Endothelial cell of umbilical vein (primary cell): ENCODE measurements at regions of chr3 and their contacts with region 1.

Region 1: GRCh38 chr3:100893590-100893989 is 99.6 kb downstream of the ABI3BP start:
- DNase-seq: peak; percentile 74
- H3K4me3 ChIP-seq: no peak overlapping the region
- H3K27ac ChIP-seq: no peak overlapping the region
- H3K4me1 ChIP-seq: peaks cover 8% of the 10 kb centered on the region
- H3K27me3 ChIP-seq: no peaks in the 10 kb centered on the region
- CTCF ChIP-seq: peak; percentile 78 to 80
- POLR2A ChIP-seq: no peak

Region 2: GRCh38 chr3:99833617-99834205 is 1059.9 kb before region 1 on chr3:
- CTCF ChIA-PET with region 1: interaction called, 4 read pairs
- POLR2A ChIA-PET with region 1: no interaction called
- dilution Hi-C with region 1: no loop called
- intact Hi-C with region 1: loop called (anchors 5 kb)
- DNase-seq: peak; percentile 87
- H3K4me3 ChIP-seq: no peak overlapping the region
- H3K27ac ChIP-seq: no peak overlapping the region
- H3K4me1 ChIP-seq: peaks cover 23% of the 10 kb centered on the region
- H3K27me3 ChIP-seq: no peaks in the 10 kb centered on the region
- CTCF ChIP-seq: no peak
- POLR2A ChIP-seq: no peak

Region 3: GRCh38 chr3:100697172-100697571 is 196.4 kb before region 1 on chr3:
- CTCF ChIA-PET with region 1: no interaction called
- POLR2A ChIA-PET with region 1: no interaction called
- dilution Hi-C with region 1: no loop called
- intact Hi-C with region 1: no loop called
- DNase-seq: no peak
- H3K4me3 ChIP-seq: no peak overlapping the region
- H3K27ac ChIP-seq: no peak overlapping the region
- H3K4me1 ChIP-seq: no peaks in the 10 kb centered on the region
- H3K27me3 ChIP-seq: peaks cover 12 to 35% of the 10 kb centered on the region in 2 experiments
- CTCF ChIP-seq: no peak
- POLR2A ChIP-seq: no peak

Region 4: GRCh38 chr3:100825574-100825973 is 68.0 kb before region 1 on chr3:
- CTCF ChIA-PET with region 1: interaction called, 4 read pairs
- POLR2A ChIA-PET with region 1: no interaction called
- dilution Hi-C with region 1: no loop called
- intact Hi-C with region 1: loop called (anchors 2 kb)
- DNase-seq: peak; percentile 70
- H3K4me3 ChIP-seq: no peak overlapping the region
- H3K27ac ChIP-seq: no peak overlapping the region
- H3K4me1 ChIP-seq: peaks cover 5% of the 10 kb centered on the region
- H3K27me3 ChIP-seq: no peaks in the 10 kb centered on the region
- CTCF ChIP-seq: no peak
- POLR2A ChIP-seq: no peak

Region 5: GRCh38 chr3:100993309-100993708 is 99.7 kb after region 1 on chr3 and contains the start of gene ABI3BP:
- CTCF ChIA-PET with region 1: interaction called, 11 read pairs
- POLR2A ChIA-PET with region 1: no interaction called
- dilution Hi-C with region 1: no loop called
- intact Hi-C with region 1: no loop called
- DNase-seq: peak; percentile 91
- H3K4me3 ChIP-seq: peak within 1 kb of the TSS; percentile 63 to 90 (median 77)
- H3K27ac ChIP-seq: peak within 1 kb of the TSS; percentile 51
- H3K4me1 ChIP-seq: peaks cover 14% of the 10 kb centered on the region
- H3K27me3 ChIP-seq: no peaks in the 10 kb centered on the region
- CTCF ChIP-seq: no peak
- POLR2A ChIP-seq: peak; percentile 74
- total RNA-seq, gene ABI3BP: 55.9 and 78.1 TPM in 2 replicates

Region 6: DNA sequence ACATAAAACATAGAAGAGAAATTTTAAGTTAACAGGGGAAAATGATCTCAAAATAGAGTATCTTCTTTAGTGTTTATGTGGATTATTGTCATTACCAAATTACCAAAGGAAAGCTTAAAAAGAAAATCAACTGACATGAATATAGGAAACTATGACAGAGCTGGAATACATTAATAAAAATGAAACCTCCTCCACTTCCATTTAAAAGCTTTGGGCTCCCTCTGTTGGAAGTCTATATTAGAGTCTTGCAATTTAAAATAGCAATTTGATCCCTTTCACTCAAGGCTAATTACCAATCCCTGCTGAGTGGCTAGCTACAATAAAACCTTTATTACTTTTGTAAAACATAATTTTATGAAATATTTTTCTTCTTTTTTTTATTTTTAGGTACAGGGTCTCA is 488.2 kb after region 1 on chr3:
- CTCF ChIA-PET with region 1: interaction called, 16 read pairs
- POLR2A ChIA-PET with region 1: no interaction called
- dilution Hi-C with region 1: no loop called
- intact Hi-C with region 1: loop called (anchors 1 kb)
- DNase-seq: peak; percentile 40
- H3K4me3 ChIP-seq: no peak overlapping the region
- H3K27ac ChIP-seq: no peak overlapping the region
- H3K4me1 ChIP-seq: no peaks in the 10 kb centered on the region
- H3K27me3 ChIP-seq: no peaks in the 10 kb centered on the region
- CTCF ChIP-seq: peak; percentile 7 to 11
- POLR2A ChIP-seq: no peak

Region 7: DNA sequence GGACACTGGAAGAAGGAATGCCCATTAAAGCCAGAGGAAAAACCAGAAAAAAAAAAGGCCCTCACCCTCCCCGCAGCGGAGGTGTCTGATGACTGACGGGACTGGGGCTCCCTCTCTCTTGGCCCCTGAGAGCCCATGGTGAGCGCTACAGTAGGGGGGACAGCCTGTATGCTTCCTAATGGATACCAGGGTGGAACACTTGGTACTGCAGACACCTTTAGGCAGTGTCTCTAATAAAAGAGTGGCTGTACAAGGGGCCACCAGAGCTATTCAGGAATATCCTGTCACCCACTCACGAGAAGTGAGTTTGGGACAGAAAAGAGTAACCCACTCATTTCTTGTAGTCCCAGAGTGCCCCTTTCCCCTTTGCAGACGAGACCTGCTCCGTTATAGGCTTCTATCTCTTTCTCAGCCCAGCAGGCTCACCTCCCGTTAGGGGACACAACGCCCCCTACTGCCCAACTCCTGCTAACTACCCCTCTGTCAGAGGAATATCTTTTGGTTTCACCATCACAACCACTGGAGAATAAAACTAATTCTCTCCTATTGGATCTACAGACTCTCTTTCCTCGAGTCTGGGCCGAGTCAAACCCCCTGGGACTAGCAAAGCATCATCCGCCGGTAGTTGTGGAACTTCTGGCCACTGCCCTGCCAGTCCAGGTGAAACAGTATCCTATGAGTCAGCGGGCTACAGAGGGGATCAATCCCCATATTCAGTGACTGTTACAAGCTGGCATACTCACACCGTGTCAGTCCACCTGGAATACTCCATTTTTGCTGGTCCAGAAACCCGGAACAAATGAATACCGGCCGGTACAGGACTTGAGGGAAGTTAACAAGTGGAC is 742.6 kb after region 1 on chr3:
- CTCF ChIA-PET with region 1: interaction called, 6 read pairs
- POLR2A ChIA-PET with region 1: no interaction called
- dilution Hi-C with region 1: no loop called
- intact Hi-C with region 1: loop called (anchors 1 kb)
- DNase-seq: peak; percentile 60
- H3K4me3 ChIP-seq: no peak overlapping the region
- H3K27ac ChIP-seq: no peak overlapping the region
- H3K4me1 ChIP-seq: no peaks in the 10 kb centered on the region
- H3K27me3 ChIP-seq: no peaks in the 10 kb centered on the region
- CTCF ChIP-seq: peak; percentile 69 to 71
- POLR2A ChIP-seq: no peak